Aorta (tissue), 5 donors: ENCODE measurements at regions of chr15 and their contacts with region 1.

Region 1: GRCh38 chr15:44286814-44287452 is 1.6 kb upstream of the GOLM2 start:
- DNase-seq: no peak
- ATAC-seq: no peak
- H3K4me3 ChIP-seq: peak overlapping the region in 1 of 2 donors; percentile 100
- H3K27ac ChIP-seq: no peak overlapping the region
- H3K4me1 ChIP-seq: no peaks in the 10 kb centered on the region
- H3K27me3 ChIP-seq: no peaks in the 10 kb centered on the region

Region 2: GRCh38 chr15:44231842-44232241 is 55.1 kb before region 1 on chr15:
- intact Hi-C with region 1: no loop called
- DNase-seq: no peak
- ATAC-seq: no peak
- H3K4me3 ChIP-seq: no peak overlapping the region
- H3K27ac ChIP-seq: no peak overlapping the region
- H3K4me1 ChIP-seq: no peaks in the 10 kb centered on the region
- H3K27me3 ChIP-seq: no peaks in the 10 kb centered on the region

Region 3: GRCh38 chr15:44347495-44347894 is 60.6 kb after region 1 on chr15:
- intact Hi-C with region 1: no loop called
- DNase-seq: no peak
- ATAC-seq: no peak
- H3K4me3 ChIP-seq: no peak overlapping the region
- H3K27ac ChIP-seq: no peak overlapping the region
- H3K4me1 ChIP-seq: no peaks in the 10 kb centered on the region
- H3K27me3 ChIP-seq: no peaks in the 10 kb centered on the region

Region 4: GRCh38 chr15:44426975-44427755 is 140.2 kb after region 1 on chr15 and contains the start of gene CTDSPL2:
- intact Hi-C with region 1: loop called in 1 of 2 experiments (anchors 5 kb)
- DNase-seq: peak; percentile 99
- ATAC-seq: peak; percentile 100
- H3K4me3 ChIP-seq: peak within 1 kb of the TSS; percentile 69 to 87
- H3K27ac ChIP-seq: peak within 1 kb of the TSS; percentile 38 to 76
- H3K4me1 ChIP-seq: peaks cover 0 to 2% of the 10 kb centered on the region in 2 donors
- H3K27me3 ChIP-seq: no peaks in the 10 kb centered on the region
- total RNA-seq, gene CTDSPL2: 35.9 to 43.9 TPM

Region 5: GRCh38 chr15:44536962-44537734 is 250.2 kb after region 1 on chr15 and contains the start of gene EIF3J:
- intact Hi-C with region 1: loop called in 1 of 2 experiments (anchors 2 kb)
- DNase-seq: peak; percentile 98
- ATAC-seq: peak; percentile 98
- H3K4me3 ChIP-seq: peak within 1 kb of the TSS; percentile 76 to 77
- H3K27ac ChIP-seq: peak within 1 kb of the TSS; percentile 91 to 93
- H3K4me1 ChIP-seq: peaks cover 2 to 11% of the 10 kb centered on the region in 2 donors
- H3K27me3 ChIP-seq: no peaks in the 10 kb centered on the region
- total RNA-seq, gene EIF3J: 61.7 to 65.9 TPM